Right cardiac atrium (tissue), 5 donors: ENCODE measurements at regions of chr5 and their contacts with region 1.

Region 1: GRCh38 chr5:74673011-74673790 is 11.8 kb upstream of the HEXB start:
- DNase-seq: peak in 1 of 3 donors; percentile 30
- ATAC-seq: peak; percentile 63 to 80
- H3K4me3 ChIP-seq: peak overlapping the region; percentile 37
- H3K27ac ChIP-seq: peak overlapping the region; percentile 36
- H3K4me1 ChIP-seq: peaks cover 3% of the 10 kb centered on the region
- H3K27me3 ChIP-seq: no peaks in the 10 kb centered on the region

Region 2: DNA sequence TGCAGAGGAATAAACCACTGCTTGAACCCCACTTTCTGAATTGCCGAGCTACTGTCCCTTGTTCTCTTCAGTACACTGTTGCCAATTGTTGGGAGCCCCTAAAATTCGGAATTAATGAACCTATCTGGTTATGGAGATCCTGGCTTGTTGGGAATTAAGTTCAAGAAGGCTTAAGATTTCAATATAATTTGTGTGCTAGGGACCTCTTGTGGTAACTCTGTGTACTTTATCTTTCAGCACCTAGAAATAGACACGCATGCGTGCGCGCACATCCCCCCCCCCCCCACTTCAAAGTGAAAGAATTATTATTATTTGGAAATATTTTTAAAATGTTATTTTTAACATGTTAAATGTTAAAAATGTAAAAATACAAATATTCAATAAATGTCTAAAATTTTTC is 246.3 kb after region 1 on chr5:
- intact Hi-C with region 1: loop called in 2 of 4 experiments (anchors 5 kb)
- DNase-seq: no peak
- ATAC-seq: peak in 1 of 2 donors; percentile 57
- H3K4me3 ChIP-seq: no peak overlapping the region
- H3K27ac ChIP-seq: no peak overlapping the region
- H3K4me1 ChIP-seq: no peaks in the 10 kb centered on the region
- H3K27me3 ChIP-seq: no peaks in the 10 kb centered on the region